AG04450 (cell line): ENCODE measurements at regions of chr1 and their contacts with region 1.

Region 1: GRCh38 chr1:63316984-63317816 is 5.2 kb upstream of the FOXD3 start:
- DNase-seq: no peak
- H3K4me3 ChIP-seq: peak overlapping the region; percentile 17; the same call in 1 of the 2 replicates
- H3K27ac ChIP-seq: no peak overlapping the region
- H3K27me3 ChIP-seq: peaks cover 80% of the 10 kb centered on the region
- CTCF ChIP-seq: peak; percentile 51

Region 2: GRCh38 chr1:62870148-62870547 is 447.1 kb before region 1 on chr1:
- CTCF ChIA-PET with region 1: no interaction called
- POLR2A ChIA-PET with region 1: no interaction called
- DNase-seq: peak; percentile 43
- H3K4me3 ChIP-seq: no peak overlapping the region
- H3K27ac ChIP-seq: no peak overlapping the region
- H3K27me3 ChIP-seq: no peaks in the 10 kb centered on the region
- CTCF ChIP-seq: no peak

Region 3: DNA sequence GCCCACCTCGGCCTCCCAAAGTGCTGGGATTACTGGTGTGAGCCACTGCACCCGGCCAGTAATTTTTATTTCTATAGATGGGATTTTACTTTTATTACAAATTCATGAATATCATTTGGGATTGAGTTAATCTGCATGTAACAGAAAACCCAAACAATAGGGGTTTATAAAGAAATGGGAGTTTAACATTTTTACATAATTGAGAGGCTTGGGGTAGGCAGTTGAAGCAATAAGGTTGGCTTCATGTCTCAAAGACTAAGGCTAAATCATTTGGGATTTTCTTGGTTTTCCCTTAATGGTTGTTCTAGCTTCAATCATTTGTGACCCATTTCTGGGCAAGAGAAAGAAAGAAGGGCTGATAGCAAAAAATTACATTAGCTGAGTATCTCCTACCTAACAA is 113.6 kb before region 1 on chr1:
- CTCF ChIA-PET with region 1: no interaction called
- POLR2A ChIA-PET with region 1: no interaction called
- DNase-seq: no peak
- H3K4me3 ChIP-seq: no peak overlapping the region
- H3K27ac ChIP-seq: no peak overlapping the region
- H3K27me3 ChIP-seq: peaks cover 11% of the 10 kb centered on the region
- CTCF ChIP-seq: no peak

Region 4: GRCh38 chr1:63327417-63328139 is 10.4 kb after region 1 on chr1:
- CTCF ChIA-PET with region 1: interaction called, 17 read pairs
- POLR2A ChIA-PET with region 1: no interaction called
- DNase-seq: peak; percentile 15
- H3K4me3 ChIP-seq: no peak overlapping the region
- H3K27ac ChIP-seq: no peak overlapping the region
- H3K27me3 ChIP-seq: peaks cover 82% of the 10 kb centered on the region
- CTCF ChIP-seq: peak; percentile 79